Mammary epithelial cell (primary cell): ENCODE measurements at regions of chrX and their contacts with region 1.

Region 1: DNA sequence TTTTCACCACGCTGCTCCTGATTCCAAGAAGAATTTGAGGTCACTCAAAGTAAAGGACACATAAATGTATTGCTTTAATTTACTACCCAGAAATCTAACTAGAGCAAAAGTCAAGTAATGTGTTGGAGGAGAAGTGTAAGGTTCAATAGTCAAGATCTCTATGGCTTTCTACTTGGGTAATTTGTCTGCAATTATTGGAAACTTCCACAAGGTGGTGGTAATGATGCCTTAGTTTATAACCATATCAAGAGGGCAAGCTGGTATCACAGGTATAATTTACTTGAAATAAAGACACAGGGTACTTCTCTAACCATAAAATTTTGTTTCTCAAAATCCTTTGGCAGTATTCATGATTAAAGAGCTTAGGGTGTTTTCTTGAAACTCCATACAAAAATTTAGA is 10.2 kb upstream of the GRIA3 start:
- DNase-seq: no peak
- H3K4me3 ChIP-seq: no peak overlapping the region
- H3K27ac ChIP-seq: no peak overlapping the region
- H3K4me1 ChIP-seq: no peaks in the 10 kb centered on the region
- H3K27me3 ChIP-seq: no peaks in the 10 kb centered on the region
- CTCF ChIP-seq: peak; percentile 8 to 23

Region 2: GRCh38 chrX:122972604-122973003 is 201.2 kb before region 1 on chrX:
- CTCF ChIA-PET with region 1: interaction called, 14 read pairs
- dilution Hi-C with region 1: no loop called
- in situ Hi-C with region 1: no loop called
- intact Hi-C with region 1: no loop called
- DNase-seq: no peak
- H3K4me3 ChIP-seq: no peak overlapping the region
- H3K27ac ChIP-seq: no peak overlapping the region
- H3K4me1 ChIP-seq: no peaks in the 10 kb centered on the region
- H3K27me3 ChIP-seq: no peaks in the 10 kb centered on the region
- CTCF ChIP-seq: no peak

Region 3: DNA sequence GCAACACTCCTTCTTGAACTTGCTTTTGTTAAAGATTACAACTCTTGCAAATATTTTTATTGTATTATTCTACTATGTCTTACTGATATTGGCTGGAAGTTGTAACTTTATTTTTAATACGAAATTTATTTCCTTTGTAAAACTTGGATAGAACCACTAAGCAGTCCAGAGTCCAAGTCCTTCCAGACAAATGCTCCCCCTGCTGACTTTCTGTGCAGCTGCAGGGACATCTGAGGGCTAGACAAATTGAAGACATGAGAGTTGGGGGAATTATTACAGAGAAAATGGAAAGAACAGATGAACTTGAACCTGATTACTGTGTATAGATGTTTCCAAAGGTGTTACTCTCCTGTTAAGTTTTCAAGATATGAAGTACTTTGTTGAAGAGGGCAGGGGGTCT is 249.0 kb after region 1 on chrX:
- CTCF ChIA-PET with region 1: no interaction called
- dilution Hi-C with region 1: no loop called
- in situ Hi-C with region 1: no loop called
- intact Hi-C with region 1: loop called (anchors 2 kb)
- DNase-seq: peak; percentile 27
- H3K4me3 ChIP-seq: no peak overlapping the region
- H3K27ac ChIP-seq: no peak overlapping the region
- H3K4me1 ChIP-seq: peaks cover 7% of the 10 kb centered on the region
- H3K27me3 ChIP-seq: no peaks in the 10 kb centered on the region
- CTCF ChIP-seq: peak; percentile 57 to 75